ENCODE measurements at regions of chr1 and their contacts with region 1.

Region 1: GRCh38 chr1:226457307-226457712 is 49.4 kb upstream of the PARP1 start:
- DNase-seq: peak; percentile 62
- ATAC-seq: peak; percentile 91
- H3K4me3 Mint-ChIP-seq: no peak overlapping the region
- H3K27ac Mint-ChIP-seq: no peak overlapping the region; the same call in 1 of the 2 replicates
- H3K4me1 Mint-ChIP-seq: peaks cover 20% of the 10 kb centered on the region
- H3K27me3 Mint-ChIP-seq: no peaks in the 10 kb centered on the region
- CTCF ChIP-seq: peak; percentile 70; the same call in 1 of the 2 replicates

Region 2: GRCh38 chr1:226407497-226408284 is 49.6 kb before region 1 on chr1 and contains the start of gene PARP1:
- CTCF ChIA-PET with region 1: interaction called, 28 read pairs
- POLR2A ChIA-PET with region 1: interaction called, 4 read pairs
- DNase-seq: peak; percentile 82
- ATAC-seq: peak; percentile 71
- H3K4me3 Mint-ChIP-seq: peak within 1 kb of the TSS; percentile 99
- H3K27ac Mint-ChIP-seq: peak within 1 kb of the TSS; percentile 99
- H3K4me1 Mint-ChIP-seq: peaks cover 43% of the 10 kb centered on the region
- H3K27me3 Mint-ChIP-seq: no peaks in the 10 kb centered on the region
- CTCF ChIP-seq: peak; percentile 86
- total RNA-seq, gene PARP1: 366 to 376 TPM (median 371 TPM) in 3 replicates

Region 3: DNA sequence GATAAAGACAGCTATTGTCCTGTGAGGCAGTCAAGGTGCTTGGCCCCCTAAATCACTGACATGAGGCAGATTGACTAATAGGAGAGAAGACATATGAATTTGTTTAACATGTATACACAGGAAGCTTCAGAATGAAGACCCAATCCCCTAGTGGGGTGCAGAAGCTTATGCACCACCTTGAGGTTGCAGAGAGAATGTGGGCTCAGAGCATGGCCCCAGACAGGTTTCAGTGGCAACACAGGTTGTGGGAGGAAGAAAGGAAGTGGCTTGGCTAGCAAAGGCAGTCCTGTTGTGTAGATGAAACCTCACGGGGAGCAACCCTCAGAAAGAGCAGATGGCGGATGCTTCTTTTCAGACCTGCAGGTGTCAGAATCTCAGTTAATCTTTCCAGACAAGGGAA is 12.4 kb before region 1 on chr1:
- CTCF ChIA-PET with region 1: interaction called, 36 read pairs
- POLR2A ChIA-PET with region 1: no interaction called
- DNase-seq: no peak
- ATAC-seq: peak; percentile 80
- H3K4me3 Mint-ChIP-seq: no peak overlapping the region
- H3K27ac Mint-ChIP-seq: no peak overlapping the region
- H3K4me1 Mint-ChIP-seq: peaks cover 61% of the 10 kb centered on the region
- H3K27me3 Mint-ChIP-seq: no peaks in the 10 kb centered on the region
- CTCF ChIP-seq: no peak

Region 4: GRCh38 chr1:226489718-226490425 is 32.6 kb after region 1 on chr1:
- CTCF ChIA-PET with region 1: interaction called, 11 read pairs
- POLR2A ChIA-PET with region 1: no interaction called
- DNase-seq: no peak
- ATAC-seq: no peak
- H3K4me3 Mint-ChIP-seq: no peak overlapping the region
- H3K27ac Mint-ChIP-seq: no peak overlapping the region
- H3K4me1 Mint-ChIP-seq: peaks cover 17% of the 10 kb centered on the region
- H3K27me3 Mint-ChIP-seq: peaks cover 3% of the 10 kb centered on the region
- CTCF ChIP-seq: no peak

Region 5: GRCh38 chr1:226526801-226527595 is 69.7 kb after region 1 on chr1:
- CTCF ChIA-PET with region 1: interaction called, 11 read pairs
- POLR2A ChIA-PET with region 1: no interaction called
- DNase-seq: peak; percentile 71
- ATAC-seq: peak; percentile 98
- H3K4me3 Mint-ChIP-seq: no peak overlapping the region
- H3K27ac Mint-ChIP-seq: no peak overlapping the region
- H3K4me1 Mint-ChIP-seq: peaks cover 14% of the 10 kb centered on the region
- H3K27me3 Mint-ChIP-seq: peaks cover 20% of the 10 kb centered on the region
- CTCF ChIP-seq: no peak

Region 6: DNA sequence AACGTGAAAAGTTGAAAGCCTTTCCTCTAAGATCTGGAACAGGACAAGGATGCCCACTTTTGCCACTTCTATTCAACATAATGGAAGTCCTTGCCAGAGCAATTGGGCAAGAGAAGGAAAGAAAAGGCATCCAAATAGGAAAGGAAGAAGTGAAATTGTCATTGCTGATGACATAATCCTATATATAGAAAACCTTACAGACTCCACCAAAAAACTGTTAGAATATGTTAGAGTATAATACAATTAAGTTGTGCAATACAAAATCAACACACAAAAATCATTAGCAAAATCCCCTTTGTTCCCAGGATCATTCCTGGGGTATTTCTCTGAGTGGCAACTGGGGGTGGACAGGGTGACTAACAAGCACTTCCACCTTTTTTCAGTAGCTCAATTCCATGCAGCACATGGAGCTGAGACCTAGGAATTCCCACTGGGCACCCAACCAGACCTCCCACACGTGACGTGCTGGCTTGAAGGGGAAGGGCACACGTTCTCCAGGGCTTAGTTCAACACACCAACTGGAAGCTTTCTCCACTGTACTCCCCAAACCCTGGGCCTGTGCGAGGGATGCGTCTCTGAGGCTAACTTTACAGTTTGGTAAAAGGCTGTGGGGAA is 100.8 kb after region 1 on chr1:
- CTCF ChIA-PET with region 1: no interaction called
- POLR2A ChIA-PET with region 1: no interaction called
- DNase-seq: no peak
- ATAC-seq: no peak
- H3K4me3 Mint-ChIP-seq: no peak overlapping the region
- H3K27ac Mint-ChIP-seq: no peak overlapping the region
- H3K4me1 Mint-ChIP-seq: no peaks in the 10 kb centered on the region
- H3K27me3 Mint-ChIP-seq: peaks cover 4% of the 10 kb centered on the region
- CTCF ChIP-seq: no peak

Region 7: DNA sequence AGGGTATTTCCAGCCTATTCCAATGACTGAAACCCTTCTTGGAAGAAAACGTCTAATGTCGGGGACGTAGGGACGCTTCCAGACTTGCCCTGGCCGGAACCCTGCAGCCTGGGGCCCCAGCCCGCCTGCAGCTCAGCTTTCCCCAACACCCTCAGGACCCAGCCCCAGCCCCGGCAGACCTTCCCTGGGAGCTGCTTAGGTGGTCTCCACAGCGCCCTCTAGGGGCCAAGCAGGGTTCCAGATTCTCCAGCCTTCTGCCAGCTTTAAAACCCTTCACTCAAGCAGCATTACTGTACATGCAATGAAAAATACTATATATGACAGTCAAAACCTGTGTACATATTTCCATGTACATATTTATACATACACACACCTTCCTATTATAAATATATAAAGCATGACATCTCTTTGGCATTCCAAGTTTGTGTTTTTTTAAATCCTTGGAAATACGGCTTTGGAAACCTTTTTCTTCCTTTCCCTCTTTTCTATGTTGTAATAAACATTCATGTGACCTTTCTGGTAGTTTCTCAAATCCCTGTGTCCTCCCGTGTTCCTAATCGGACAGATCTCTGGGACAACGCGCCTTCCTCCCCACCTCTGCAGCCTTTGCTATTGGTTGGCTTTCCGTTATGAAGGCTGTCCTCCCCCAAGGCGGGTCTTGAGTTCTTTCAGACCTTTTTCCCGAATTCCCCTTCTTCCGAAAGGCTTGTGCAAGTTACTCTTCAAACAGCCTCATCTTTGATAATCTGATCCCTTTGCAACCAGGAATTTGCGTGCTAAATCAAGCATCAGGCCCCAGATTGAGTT is 151.6 kb after region 1 on chr1:
- CTCF ChIA-PET with region 1: interaction called, 12 read pairs
- POLR2A ChIA-PET with region 1: no interaction called
- DNase-seq: peak; percentile 86
- ATAC-seq: peak; percentile 66
- H3K4me3 Mint-ChIP-seq: no peak overlapping the region; the same call in 1 of the 2 replicates
- H3K27ac Mint-ChIP-seq: no peak overlapping the region
- H3K4me1 Mint-ChIP-seq: peaks cover 43% of the 10 kb centered on the region
- H3K27me3 Mint-ChIP-seq: no peaks in the 10 kb centered on the region; the same call in none of the 2 replicates
- CTCF ChIP-seq: peak; percentile 93